ENCODE measurements at regions of chr17 and their contacts with region 1.

Region 1: DNA sequence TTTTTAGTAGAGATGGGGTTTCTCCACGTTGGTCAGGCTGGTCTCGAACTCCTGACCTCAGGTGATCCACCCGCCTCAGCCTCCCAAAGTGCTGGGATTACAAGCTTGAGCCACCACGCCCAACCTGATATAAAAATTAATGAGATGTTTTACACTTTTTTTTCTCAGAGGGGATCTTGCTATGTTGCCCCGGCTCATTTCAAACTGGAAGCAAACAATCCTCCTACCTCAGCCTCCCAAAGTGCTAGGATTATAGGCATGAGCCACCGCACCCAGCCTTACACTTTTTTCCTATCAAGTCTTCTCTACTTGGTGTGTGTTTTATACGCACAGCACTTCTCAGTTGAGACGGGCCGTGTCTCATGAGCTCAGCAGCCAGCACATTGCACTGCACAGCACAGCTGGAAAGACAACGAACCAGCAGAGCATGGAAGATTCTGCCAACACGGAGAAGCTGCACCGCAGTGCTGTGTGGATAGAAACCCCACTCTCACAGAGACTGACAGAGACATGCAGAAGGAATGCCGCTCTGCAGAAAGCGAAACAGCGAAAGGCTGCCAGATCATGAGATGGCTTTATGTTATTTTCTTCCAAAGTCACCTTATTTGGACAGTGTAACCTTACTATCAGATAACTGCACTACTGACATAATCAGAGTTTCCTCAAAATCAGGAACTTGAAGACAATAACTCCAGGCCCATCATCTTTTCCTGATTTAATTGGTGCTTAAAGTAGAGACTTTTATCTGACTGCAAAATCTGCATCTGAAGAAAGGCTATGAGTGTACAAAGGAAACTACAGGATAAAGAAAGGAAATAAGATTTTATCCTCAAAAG is 6.5 kb upstream of the QRICH2 start:
- DNase-seq: no peak
- H3K4me3 ChIP-seq: no peak overlapping the region
- H3K4me3 Mint-ChIP-seq: no peak overlapping the region
- H3K27ac ChIP-seq: no peak overlapping the region
- H3K27ac Mint-ChIP-seq: peak overlapping the region in 2 of 7 donors; percentile 44 to 56
- H3K4me1 ChIP-seq: no peaks in the 10 kb centered on the region
- H3K4me1 Mint-ChIP-seq: no peaks in the 10 kb centered on the region
- H3K27me3 ChIP-seq: no peaks in the 10 kb centered on the region
- H3K27me3 Mint-ChIP-seq: peaks cover 0 to 4% (median 0%) of the 10 kb centered on the region in 3 donors
- CTCF ChIP-seq: no peak

Region 2: DNA sequence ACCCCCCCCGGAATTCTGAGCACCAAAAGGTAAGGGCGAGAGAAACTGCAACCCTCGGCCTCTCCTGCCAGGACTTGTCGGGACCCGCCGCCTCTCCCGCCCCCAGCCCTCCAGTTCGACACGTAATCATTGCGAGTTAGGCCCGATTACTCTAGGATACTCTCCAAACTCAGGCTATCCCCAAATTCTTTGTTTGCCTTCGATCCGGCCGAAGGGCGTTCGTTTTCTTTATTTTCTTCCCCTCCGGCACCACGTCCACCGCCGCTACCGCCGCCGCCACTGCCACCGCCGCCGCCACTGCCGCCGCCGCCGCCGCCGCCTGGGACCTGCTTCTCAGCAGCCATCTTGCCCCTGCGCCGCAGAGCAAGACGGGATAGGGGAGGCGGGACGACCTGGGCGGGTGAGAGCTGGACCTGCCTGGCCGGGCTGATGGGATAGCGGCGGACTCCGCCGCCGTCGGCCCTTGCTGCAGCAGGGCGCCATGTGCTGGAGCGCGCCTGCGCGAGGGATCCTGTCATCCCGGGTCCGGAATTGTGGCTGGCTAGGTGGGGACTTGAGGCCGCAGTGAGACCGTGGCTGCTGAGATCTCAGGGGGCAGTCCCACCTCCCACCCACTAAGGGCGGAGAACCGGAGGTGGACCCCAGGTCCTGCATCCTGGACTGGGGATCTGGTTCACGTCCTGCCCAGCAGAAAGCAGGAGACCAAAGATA is 242.3 kb before region 1 on chr17 and contains the start of gene SRP68:
- intact Hi-C with region 1: no loop called
- DNase-seq: peak; percentile 82 to 87 (median 85)
- H3K4me3 ChIP-seq: peak within 1 kb of the TSS; percentile 82 to 94 (median 89)
- H3K4me3 Mint-ChIP-seq: peak within 1 kb of the TSS; percentile 93 to 96
- H3K27ac ChIP-seq: peak within 1 kb of the TSS; percentile 41 to 87
- H3K27ac Mint-ChIP-seq: peak within 1 kb of the TSS; percentile 79 to 92 (median 87)
- H3K4me1 ChIP-seq: peaks cover 48 to 58% of the 10 kb centered on the region in 2 donors
- H3K4me1 Mint-ChIP-seq: peaks cover 46% of the 10 kb centered on the region
- H3K27me3 ChIP-seq: peaks cover 32 to 40% of the 10 kb centered on the region in 2 donors
- H3K27me3 Mint-ChIP-seq: peaks cover 39 to 40% (median 39%) of the 10 kb centered on the region in 3 donors
- CTCF ChIP-seq: no peak
- polyA plus RNA-seq, gene SRP68: 27.4 to 47.1 (median 42.1) TPM

Region 3: GRCh38 chr17:76264755-76265596 is 49.6 kb before region 1 on chr17 and contains the start of gene UBALD2:
- intact Hi-C with region 1: no loop called
- DNase-seq: peak; percentile 98 to 100 (median 99)
- H3K4me3 ChIP-seq: peak within 1 kb of the TSS; percentile 56 to 97 (median 77)
- H3K4me3 Mint-ChIP-seq: peak within 1 kb of the TSS; percentile 92 to 96
- H3K27ac ChIP-seq: peak within 1 kb of the TSS; percentile 84 to 87
- H3K27ac Mint-ChIP-seq: peak within 1 kb of the TSS; percentile 95 to 98 (median 96)
- H3K4me1 ChIP-seq: peaks cover 77 to 81% of the 10 kb centered on the region in 2 donors
- H3K4me1 Mint-ChIP-seq: peaks cover 76% of the 10 kb centered on the region
- H3K27me3 ChIP-seq: no peaks in the 10 kb centered on the region
- H3K27me3 Mint-ChIP-seq: peaks cover 0 to 8% (median 0%) of the 10 kb centered on the region in 3 donors
- CTCF ChIP-seq: no peak
- polyA plus RNA-seq, gene UBALD2: 1.4 to 88.6 (median 2.2) TPM

Region 4: GRCh38 chr17:76345377-76345974 is 30.9 kb after region 1 on chr17:
- intact Hi-C with region 1: loop called in 1 of 2 experiments (anchors 5 kb)
- DNase-seq: no peak
- H3K4me3 ChIP-seq: no peak overlapping the region
- H3K4me3 Mint-ChIP-seq: no peak overlapping the region
- H3K27ac ChIP-seq: no peak overlapping the region
- H3K27ac Mint-ChIP-seq: peak overlapping the region in 3 of 7 donors; percentile 42 to 59 (median 58)
- H3K4me1 ChIP-seq: no peaks in the 10 kb centered on the region
- H3K4me1 Mint-ChIP-seq: peaks cover 4% of the 10 kb centered on the region
- H3K27me3 ChIP-seq: no peaks in the 10 kb centered on the region
- H3K27me3 Mint-ChIP-seq: peaks cover 0 to 2% (median 0%) of the 10 kb centered on the region in 3 donors
- CTCF ChIP-seq: no peak

Region 5: GRCh38 chr17:76515274-76515949 is 200.8 kb after region 1 on chr17:
- intact Hi-C with region 1: no loop called
- DNase-seq: peak; percentile 90 to 99 (median 97)
- H3K4me3 ChIP-seq: peak overlapping the region in 2 of 3 experiments; percentile 6 to 45
- H3K4me3 Mint-ChIP-seq: peak overlapping the region; percentile 67 to 88
- H3K27ac ChIP-seq: peak overlapping the region; percentile 78 to 82
- H3K27ac Mint-ChIP-seq: peak overlapping the region; percentile 92 to 99 (median 94)
- H3K4me1 ChIP-seq: peaks cover 37 to 41% of the 10 kb centered on the region in 2 donors
- H3K4me1 Mint-ChIP-seq: peaks cover 47% of the 10 kb centered on the region
- H3K27me3 ChIP-seq: no peaks in the 10 kb centered on the region
- H3K27me3 Mint-ChIP-seq: peaks cover 6 to 10% (median 9%) of the 10 kb centered on the region in 3 donors
- CTCF ChIP-seq: no peak